ENCODE measurements at regions of chr11 and their contacts with region 1.

Region 1: DNA sequence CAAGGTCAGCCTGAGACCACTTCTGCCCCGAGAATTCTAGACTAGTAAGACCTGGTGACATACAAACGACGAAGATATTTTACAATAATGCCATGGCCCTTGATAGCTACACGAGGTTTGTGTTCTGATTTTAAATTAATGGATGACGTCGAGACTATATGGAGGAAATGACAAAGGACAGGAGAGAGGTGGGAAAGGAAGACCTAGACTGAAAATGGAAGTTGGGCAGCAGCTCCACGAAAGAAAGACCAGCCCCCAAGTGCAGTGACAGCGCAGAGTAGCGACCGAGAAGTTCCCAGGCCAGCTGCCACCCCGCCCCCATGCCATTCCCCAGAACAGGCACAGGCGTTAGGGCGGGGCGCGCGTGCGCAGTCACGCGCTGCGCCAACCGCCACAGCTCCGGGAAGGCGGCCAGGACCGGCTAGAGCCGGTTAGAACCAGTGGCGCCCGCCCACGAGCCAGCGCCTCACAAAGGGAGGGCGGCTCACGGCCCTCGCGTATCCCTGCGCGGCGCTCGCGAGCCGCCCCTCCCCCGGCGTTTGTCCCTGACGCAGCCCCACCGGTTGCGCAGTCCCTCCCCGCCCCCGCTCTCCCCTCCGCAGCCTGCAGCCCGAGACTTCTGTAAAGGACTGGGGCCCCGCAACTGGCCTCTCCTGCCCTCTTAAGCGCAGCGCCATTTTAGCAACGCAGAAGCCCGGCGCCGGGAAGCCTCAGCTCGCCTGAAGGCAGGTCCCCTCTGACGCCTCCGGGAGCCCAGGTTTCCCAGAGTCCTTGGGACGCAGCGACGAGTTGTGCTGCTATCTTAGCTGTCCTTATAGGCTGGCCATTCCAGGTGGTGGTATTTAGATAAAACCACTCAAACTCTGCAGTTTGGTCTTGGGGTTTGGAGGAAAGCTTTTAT is 1.5 kb upstream of the MALAT1 start:
- DNase-seq: peak; percentile 89
- H3K4me3 ChIP-seq: peak overlapping the region; percentile 63
- H3K27me3 ChIP-seq: no peaks in the 10 kb centered on the region
- CTCF ChIP-seq: no peak; the same call in 1 of the 2 replicates

Region 2: DNA sequence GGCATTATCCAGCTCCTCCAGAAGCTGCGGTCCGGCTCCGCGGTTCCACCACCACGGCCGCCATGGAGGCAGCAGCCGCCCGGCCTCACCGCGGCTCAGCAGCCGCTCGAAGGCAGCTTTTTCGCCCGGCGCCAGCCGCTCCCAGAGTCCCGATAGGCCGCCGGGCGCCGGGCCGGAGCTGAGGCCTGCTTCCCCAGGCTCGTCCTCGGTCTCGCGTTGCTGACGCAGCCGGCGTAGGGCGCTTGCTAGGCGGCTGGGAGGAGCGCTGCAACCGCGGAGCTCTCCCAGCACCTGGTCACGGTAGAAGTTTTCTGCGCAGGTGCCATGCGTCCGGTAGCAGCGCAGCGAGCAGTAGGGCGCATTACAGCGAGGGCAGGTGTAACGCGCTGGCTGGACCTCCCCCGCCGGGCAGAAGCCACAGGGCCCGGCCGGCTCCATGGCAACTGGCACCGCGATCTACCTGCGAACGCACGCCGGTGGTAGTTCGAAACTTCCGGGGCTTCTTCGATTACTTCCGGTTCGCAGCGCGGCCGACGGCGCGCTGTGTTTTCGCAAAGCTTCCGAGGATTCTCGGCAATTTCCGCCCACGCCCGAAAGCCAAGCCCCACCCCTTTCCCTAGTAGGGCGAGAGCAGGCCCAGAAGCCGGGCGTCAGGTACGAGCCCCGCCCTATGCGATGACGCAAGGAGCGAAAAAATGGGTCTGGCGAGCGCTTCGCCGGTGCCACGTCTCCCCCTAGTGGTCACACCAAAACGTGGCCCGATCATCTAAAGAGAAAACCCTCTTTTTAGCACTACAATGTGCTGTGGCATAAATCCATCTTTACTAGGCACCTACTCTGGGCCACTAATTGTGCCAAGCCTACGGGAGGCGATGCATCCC is 379.9 kb before region 1 on chr11 and contains the start of gene ZNHIT2:
- CTCF ChIA-PET with region 1: no interaction called
- POLR2A ChIA-PET with region 1: no interaction called
- DNase-seq: peak; percentile 94
- H3K4me3 ChIP-seq: peak within 1 kb of the TSS; percentile 79
- H3K27me3 ChIP-seq: no peaks in the 10 kb centered on the region
- CTCF ChIP-seq: peak; percentile 90
- polyA plus RNA-seq, gene ZNHIT2: 3.6 and 4.6 TPM in 2 replicates

Region 3: DNA sequence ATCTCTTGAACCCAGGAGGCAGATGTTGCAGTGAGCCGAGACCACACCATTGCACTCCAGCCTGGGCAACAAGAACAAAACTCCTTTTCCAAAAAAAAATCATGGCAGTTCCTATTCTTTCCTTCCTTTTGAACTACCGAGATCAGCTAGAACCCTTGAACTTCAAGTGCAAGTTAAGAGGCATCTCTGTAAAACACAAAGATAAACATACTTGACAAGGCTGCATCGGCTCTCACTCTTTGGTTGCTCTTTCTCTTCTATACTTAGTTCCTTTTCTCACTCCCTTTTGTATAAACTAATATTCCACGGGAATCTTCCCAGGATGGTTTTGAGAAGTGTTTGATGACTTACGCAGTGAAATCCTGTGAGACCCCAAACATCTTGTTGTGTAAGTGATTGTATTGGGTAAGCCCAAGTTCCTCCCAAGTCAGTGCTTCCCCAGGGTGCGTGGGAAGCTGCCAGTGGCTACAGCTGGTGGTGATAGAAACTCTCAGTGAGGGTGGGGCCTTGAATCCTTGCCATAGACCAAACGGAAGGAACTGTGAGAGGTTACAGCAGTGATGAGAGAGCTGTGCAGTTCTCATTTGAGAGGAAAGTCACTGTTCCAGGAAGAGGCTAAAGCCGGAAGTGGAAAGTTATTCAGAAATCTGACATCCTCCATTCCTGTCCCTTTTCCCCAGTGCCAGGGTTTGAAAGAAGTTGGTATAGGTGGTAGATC is 206.8 kb before region 1 on chr11:
- CTCF ChIA-PET with region 1: no interaction called
- POLR2A ChIA-PET with region 1: interaction called, 19 read pairs
- DNase-seq: peak; percentile 98
- H3K4me3 ChIP-seq: no peak overlapping the region
- H3K27me3 ChIP-seq: no peaks in the 10 kb centered on the region
- CTCF ChIP-seq: no peak

Region 4: GRCh38 chr11:65429724-65430405 is 67.5 kb before region 1 on chr11:
- CTCF ChIA-PET with region 1: no interaction called
- POLR2A ChIA-PET with region 1: interaction called, 204 read pairs
- DNase-seq: no peak
- H3K4me3 ChIP-seq: peak overlapping the region; percentile 72
- H3K27me3 ChIP-seq: no peaks in the 10 kb centered on the region
- CTCF ChIP-seq: no peak

Region 5: GRCh38 chr11:65454696-65455456 is 42.5 kb before region 1 on chr11:
- CTCF ChIA-PET with region 1: no interaction called
- POLR2A ChIA-PET with region 1: interaction called, 23 read pairs
- DNase-seq: peak; percentile 56
- H3K4me3 ChIP-seq: peak overlapping the region; percentile 45
- H3K27me3 ChIP-seq: no peaks in the 10 kb centered on the region
- CTCF ChIP-seq: 0 out of 2 replicates have a peak, but pooled peaks have one; percentile 13

Region 6: DNA sequence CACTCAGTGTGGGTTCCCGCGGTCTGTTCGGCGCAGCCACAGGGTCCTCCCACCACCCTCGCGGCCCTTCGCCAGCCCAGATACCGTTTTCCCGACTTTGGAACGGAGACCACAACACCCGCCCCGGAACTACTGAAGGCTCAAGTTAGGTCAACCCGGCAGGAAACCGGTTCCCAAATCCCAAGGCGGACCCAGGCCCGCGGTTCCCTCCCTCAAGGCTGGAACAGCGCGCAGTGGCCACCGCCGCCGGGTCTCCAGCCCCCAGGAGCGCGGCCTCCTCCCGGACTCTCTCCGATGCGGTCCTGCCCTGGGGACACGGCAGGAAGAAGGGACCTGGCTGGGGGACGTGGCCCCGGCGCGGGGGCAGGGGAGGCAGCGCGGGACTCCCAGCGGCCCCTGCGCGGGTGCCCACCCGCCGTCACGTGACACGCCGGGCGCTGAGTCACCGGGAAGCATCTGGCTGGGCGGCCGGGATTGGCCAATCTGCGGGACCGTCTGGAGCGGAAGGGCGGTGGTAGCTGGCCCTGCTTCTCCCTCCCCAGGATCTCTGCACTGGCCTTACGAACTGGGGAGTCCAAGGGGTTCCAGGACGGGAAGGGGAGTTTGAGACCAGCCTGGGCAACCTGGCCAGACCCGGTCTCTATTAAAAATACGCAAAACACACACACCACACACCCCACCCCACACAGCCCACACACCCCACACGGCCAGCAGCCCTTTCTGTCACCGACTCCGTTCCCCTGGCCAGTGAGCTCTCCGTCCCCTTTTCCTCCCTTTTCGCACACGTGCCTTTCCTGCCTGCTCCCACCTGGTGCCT is 20.0 kb before region 1 on chr11:
- CTCF ChIA-PET with region 1: interaction called, 62 read pairs
- POLR2A ChIA-PET with region 1: interaction called, 137 read pairs
- DNase-seq: no peak
- H3K4me3 ChIP-seq: peak overlapping the region; percentile 79
- H3K27me3 ChIP-seq: no peaks in the 10 kb centered on the region
- CTCF ChIP-seq: no peak

Region 7: DNA sequence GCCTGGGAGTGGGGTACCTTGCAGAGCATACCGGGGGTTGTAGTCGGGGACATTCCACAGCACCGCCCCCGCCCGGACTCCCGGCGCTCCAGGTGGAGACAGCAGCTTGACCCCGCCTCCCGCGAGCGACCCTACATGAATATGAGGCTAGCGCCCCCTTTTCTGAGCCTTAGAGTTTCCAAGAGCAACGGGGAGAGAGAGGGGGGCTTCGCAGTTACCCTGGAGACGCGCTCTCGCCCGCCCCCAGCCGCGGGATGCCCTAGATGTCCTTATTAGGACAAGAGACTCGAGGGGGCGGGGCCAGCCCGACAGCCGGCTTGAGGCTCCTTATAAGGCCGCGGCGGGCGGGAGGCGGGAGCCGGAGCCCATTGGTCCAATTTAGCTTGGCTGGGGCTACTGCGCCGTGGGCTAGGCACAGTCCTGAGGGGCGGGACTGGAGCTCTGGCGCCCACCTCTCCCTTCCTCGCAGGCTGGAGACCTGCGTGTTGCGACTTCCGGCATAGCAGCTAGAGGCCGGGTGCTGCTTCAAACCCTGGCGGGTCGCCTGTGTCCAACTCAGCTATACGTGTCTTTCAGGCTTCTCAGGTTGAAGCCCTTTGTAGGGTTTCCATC is 361.9 kb after region 1 on chr11:
- CTCF ChIA-PET with region 1: no interaction called
- POLR2A ChIA-PET with region 1: no interaction called
- DNase-seq: peak; percentile 87
- H3K4me3 ChIP-seq: peak overlapping the region; percentile 93
- H3K27me3 ChIP-seq: no peaks in the 10 kb centered on the region
- CTCF ChIP-seq: peak; percentile 17; the same call in 1 of the 2 replicates

Measured in BJ (cell line).